ENCODE measurements at regions of chr1 and their contacts with region 1.

Region 1: GRCh38 chr1:207885129-207886032 is 25.5 kb downstream of the CD34 start:
- DNase-seq: peak; percentile 64 to 91
- ATAC-seq: peak; percentile 65 to 76 (median 71)
- H3K4me3 ChIP-seq: no peak overlapping the region
- H3K4me3 Mint-ChIP-seq: peak overlapping the region; percentile 41
- H3K27ac ChIP-seq: no peak overlapping the region
- H3K27ac Mint-ChIP-seq: peak overlapping the region; percentile 86 to 94
- H3K4me1 ChIP-seq: peaks cover 29% of the 10 kb centered on the region
- H3K4me1 Mint-ChIP-seq: peaks cover 38 to 52% of the 10 kb centered on the region in 2 donors
- H3K27me3 ChIP-seq: no peaks in the 10 kb centered on the region
- H3K27me3 Mint-ChIP-seq: peaks cover 9 to 14% of the 10 kb centered on the region in 2 donors
- CTCF ChIP-seq: peak; percentile 93

Region 2: GRCh38 chr1:207963427-207964194 is 78.2 kb after region 1 on chr1:
- intact Hi-C with region 1: loop called (anchors 2 kb)
- DNase-seq: peak; percentile 90 to 92
- ATAC-seq: peak; percentile 95 to 96 (median 95)
- H3K4me3 ChIP-seq: peak overlapping the region; percentile 85
- H3K4me3 Mint-ChIP-seq: peak overlapping the region; percentile 80
- H3K27ac ChIP-seq: peak overlapping the region; percentile 84
- H3K27ac Mint-ChIP-seq: peak overlapping the region; percentile 45 to 87
- H3K4me1 ChIP-seq: peaks cover 21% of the 10 kb centered on the region
- H3K4me1 Mint-ChIP-seq: peaks cover 12 to 17% of the 10 kb centered on the region in 2 donors
- H3K27me3 ChIP-seq: peaks cover 9% of the 10 kb centered on the region
- H3K27me3 Mint-ChIP-seq: peaks cover 25 to 37% of the 10 kb centered on the region in 2 donors
- CTCF ChIP-seq: peak; percentile 99

Region 3: DNA sequence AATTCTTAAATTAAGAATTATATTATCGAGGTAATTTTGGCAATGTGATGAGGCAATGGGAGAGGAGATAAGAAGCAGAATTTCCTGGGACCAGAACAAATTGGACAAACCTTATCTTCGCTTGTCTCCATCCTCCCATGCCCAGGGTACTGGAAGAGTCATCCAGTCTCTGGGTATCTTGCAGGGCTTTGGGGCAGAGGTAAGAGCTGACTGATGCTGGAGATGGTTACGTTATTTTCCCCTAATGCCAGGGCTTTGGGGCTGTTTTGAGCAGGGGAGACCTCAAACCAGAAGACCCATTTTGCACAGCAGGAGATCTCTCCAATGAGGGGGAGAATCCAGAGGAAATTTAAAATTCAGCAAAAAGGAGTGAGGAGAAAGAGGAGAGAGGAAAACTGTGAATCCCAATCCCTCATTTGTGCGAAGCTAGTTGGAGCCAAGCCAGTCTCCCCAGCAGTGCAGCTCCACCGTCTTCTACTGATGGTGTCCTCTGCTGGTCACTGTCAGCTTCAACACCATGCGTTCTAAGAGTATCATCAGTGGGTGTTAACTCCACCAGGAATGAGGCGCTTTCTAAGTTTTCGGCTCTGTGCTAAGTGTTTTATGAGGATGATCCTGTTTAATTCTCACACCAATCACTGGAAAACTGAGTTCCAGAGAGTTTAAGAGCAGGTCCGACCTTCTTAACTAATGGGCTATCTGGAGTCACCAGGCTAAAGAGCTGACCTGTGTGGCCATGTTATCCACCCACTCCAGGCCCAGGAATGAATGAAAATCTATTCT is 112.3 kb after region 1 on chr1:
- intact Hi-C with region 1: loop called (anchors 1 kb)
- DNase-seq: peak in 1 of 2 donors; percentile 71
- ATAC-seq: peak; percentile 75 to 94 (median 81)
- H3K4me3 ChIP-seq: no peak overlapping the region
- H3K4me3 Mint-ChIP-seq: no peak overlapping the region
- H3K27ac ChIP-seq: no peak overlapping the region
- H3K27ac Mint-ChIP-seq: no peak overlapping the region
- H3K4me1 ChIP-seq: no peaks in the 10 kb centered on the region
- H3K4me1 Mint-ChIP-seq: no peaks in the 10 kb centered on the region
- H3K27me3 ChIP-seq: no peaks in the 10 kb centered on the region
- H3K27me3 Mint-ChIP-seq: peaks cover 12 to 17% of the 10 kb centered on the region in 2 donors
- CTCF ChIP-seq: peak; percentile 76